ENCODE measurements at regions of chr1 and their contacts with region 1.

Region 1: GRCh38 chr1:66374561-66375111 is 159.3 kb upstream of the SGIP1 start:
- DNase-seq: peak; percentile 80
- ATAC-seq: peak; percentile 88
- H3K4me3 ChIP-seq: no peak overlapping the region
- H3K27ac ChIP-seq: peak overlapping the region; percentile 45
- H3K4me1 ChIP-seq: peaks cover 28% of the 10 kb centered on the region
- H3K27me3 ChIP-seq: no peaks in the 10 kb centered on the region
- CTCF ChIP-seq: no peak

Region 2: DNA sequence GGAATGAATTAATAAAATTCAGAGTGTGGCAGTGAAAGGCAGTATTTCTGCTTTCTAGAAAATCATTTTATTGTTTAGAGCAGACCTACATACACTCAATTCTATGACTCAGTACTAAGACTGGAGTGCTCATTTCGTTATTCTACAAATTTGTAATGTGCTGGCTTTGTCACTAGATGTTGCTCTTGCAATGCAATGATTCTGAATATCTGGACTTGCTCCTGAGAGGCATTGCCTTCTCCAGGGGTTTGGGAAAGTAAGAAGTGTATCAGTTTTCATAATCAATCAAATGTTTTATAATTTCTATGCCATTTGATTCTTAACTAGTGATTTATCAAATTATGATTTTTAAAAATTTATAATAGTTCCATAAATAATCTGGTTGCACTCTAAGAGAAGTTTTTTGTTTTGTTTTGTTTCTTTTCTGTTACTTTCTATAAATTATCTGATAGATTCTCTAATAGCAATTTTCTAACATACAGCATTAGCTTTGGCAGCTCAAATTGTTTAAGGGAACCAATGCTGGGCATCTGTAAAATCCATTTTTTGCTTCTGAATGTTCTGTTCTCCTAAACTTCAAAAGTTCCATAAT is 121.2 kb before region 1 on chr1:
- CTCF ChIA-PET with region 1: no interaction called
- POLR2A ChIA-PET with region 1: no interaction called
- intact Hi-C with region 1: no loop called
- DNase-seq: peak; percentile 88
- ATAC-seq: peak; percentile 84
- H3K4me3 ChIP-seq: no peak overlapping the region
- H3K27ac ChIP-seq: no peak overlapping the region
- H3K4me1 ChIP-seq: peaks cover 20% of the 10 kb centered on the region
- H3K27me3 ChIP-seq: 0 out of 2 replicates have a peak, but pooled peaks cover 5% of the 10 kb centered on the region
- CTCF ChIP-seq: peak; percentile 89

Region 3: GRCh38 chr1:66285618-66286270 is 88.9 kb before region 1 on chr1:
- CTCF ChIA-PET with region 1: no interaction called
- POLR2A ChIA-PET with region 1: no interaction called
- intact Hi-C with region 1: loop called (anchors 2 kb)
- DNase-seq: peak; percentile 83
- ATAC-seq: peak; percentile 71
- H3K4me3 ChIP-seq: no peak overlapping the region
- H3K27ac ChIP-seq: peak overlapping the region; percentile 96
- H3K4me1 ChIP-seq: peaks cover 64% of the 10 kb centered on the region
- H3K27me3 ChIP-seq: no peaks in the 10 kb centered on the region
- CTCF ChIP-seq: no peak

Region 4: DNA sequence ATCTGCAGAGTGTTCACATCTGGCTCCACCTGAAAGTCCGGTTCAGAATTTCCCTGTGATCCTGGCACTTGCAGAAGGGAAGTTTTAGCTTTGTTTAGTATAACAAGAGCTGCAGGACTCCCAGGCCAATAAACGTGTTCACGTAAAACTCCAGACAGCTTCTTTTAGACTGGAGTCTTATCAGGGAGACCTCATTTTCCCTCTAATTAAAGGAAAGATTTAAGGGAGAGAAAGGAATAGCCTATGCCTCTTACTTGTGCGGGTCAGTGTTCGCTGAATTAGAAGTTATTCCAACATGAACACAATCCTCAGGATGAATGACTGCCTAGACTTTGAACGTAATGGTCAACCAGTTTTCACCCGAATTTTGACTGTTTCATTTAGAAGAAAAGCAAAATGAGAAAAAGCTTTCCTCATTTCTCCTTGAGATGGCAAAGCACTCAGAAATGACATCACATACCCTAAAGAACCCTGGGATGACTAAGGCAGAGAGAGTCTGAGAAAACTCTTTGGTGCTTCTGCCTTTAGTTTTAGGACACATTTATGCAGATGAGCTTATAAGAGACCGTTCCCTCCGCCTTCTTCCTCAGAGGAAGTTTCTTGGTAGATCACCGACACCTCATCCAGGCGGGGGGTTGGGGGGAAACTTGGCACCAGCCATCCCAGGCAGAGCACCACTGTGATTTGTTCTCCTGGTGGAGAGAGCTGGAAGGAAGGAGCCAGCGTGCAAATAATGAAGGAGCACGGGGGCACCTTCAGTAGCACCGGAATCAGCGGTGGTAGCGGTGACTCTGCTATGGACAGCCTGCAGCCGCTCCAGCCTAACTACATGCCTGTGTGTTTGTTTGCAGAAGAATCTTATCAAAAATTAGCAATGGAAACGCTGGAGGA is 42.7 kb before region 1 on chr1:
- CTCF ChIA-PET with region 1: no interaction called
- POLR2A ChIA-PET with region 1: no interaction called
- intact Hi-C with region 1: no loop called
- DNase-seq: peak; percentile 69
- ATAC-seq: peak; percentile 91
- H3K4me3 ChIP-seq: peak overlapping the region; percentile 66
- H3K27ac ChIP-seq: peak overlapping the region; percentile 86
- H3K4me1 ChIP-seq: peaks cover 26% of the 10 kb centered on the region
- H3K27me3 ChIP-seq: no peaks in the 10 kb centered on the region
- CTCF ChIP-seq: peak; percentile 20; the same call in 1 of the 2 replicates

Region 5: GRCh38 chr1:66916320-66916719 is 541.7 kb after region 1 on chr1:
- CTCF ChIA-PET with region 1: no interaction called
- POLR2A ChIA-PET with region 1: no interaction called
- intact Hi-C with region 1: no loop called
- DNase-seq: no peak
- ATAC-seq: no peak
- H3K4me3 ChIP-seq: no peak overlapping the region
- H3K27ac ChIP-seq: no peak overlapping the region
- H3K4me1 ChIP-seq: no peaks in the 10 kb centered on the region
- H3K27me3 ChIP-seq: no peaks in the 10 kb centered on the region
- CTCF ChIP-seq: no peak